ENCODE measurements at regions of chr6 and their contacts with region 1.

Region 1: DNA sequence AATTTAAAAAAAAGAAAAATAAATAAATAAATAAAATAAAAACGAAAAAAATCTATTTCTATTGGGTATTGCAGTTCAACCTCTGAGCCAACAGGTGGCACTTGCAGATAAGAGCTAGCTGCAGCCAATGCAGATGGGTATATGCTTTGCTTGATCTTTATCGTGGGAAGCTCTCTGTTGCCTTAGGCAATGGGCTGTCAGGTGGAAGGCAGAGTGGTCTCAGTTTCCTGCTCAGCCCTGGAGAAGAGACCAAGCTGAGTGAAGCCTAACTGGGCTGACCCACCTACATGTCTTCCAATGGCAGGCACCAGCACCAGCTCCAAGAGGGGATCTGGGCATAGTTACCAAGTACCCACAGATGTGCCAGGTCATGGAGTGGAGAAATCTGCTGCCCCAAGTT is 95.0 kb downstream of the AK9 start:
- DNase-seq: peak; percentile 42
- H3K4me3 ChIP-seq: no peak overlapping the region
- H3K27ac ChIP-seq: no peak overlapping the region
- H3K4me1 ChIP-seq: no peaks in the 10 kb centered on the region
- H3K27me3 ChIP-seq: no peaks in the 10 kb centered on the region
- CTCF ChIP-seq: peak; percentile 49

Region 2: DNA sequence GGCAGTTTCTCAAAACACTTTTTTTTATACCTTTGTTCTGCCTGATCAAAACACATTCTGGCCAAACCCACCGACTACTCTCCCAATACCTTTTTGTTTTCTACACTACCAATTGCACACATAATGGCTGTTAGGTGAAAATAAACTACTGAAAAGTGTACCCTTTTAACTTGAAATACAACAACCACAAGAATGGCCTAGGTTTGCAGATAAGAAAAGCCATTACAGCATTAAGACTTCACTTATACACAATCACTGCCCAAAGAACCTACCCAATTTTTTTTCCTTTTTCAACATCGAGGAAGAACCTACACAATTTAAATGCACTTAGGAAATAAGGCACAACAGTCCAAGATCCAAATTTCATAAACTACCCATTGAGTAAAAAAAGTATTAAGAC is 1639.8 kb before region 1 on chr6:
- CTCF ChIA-PET with region 1: no interaction called
- POLR2A ChIA-PET with region 1: interaction called, 16 read pairs
- intact Hi-C with region 1: no loop called
- DNase-seq: no peak
- H3K4me3 ChIP-seq: peak overlapping the region; percentile 83
- H3K27ac ChIP-seq: peak overlapping the region; percentile 90
- H3K4me1 ChIP-seq: peaks cover 10% of the 10 kb centered on the region
- H3K27me3 ChIP-seq: no peaks in the 10 kb centered on the region
- CTCF ChIP-seq: no peak